Dorsolateral prefrontal cortex (tissue), 120 donors: ENCODE measurements at regions of chr6 and their contacts with region 1.

Region 1: DNA sequence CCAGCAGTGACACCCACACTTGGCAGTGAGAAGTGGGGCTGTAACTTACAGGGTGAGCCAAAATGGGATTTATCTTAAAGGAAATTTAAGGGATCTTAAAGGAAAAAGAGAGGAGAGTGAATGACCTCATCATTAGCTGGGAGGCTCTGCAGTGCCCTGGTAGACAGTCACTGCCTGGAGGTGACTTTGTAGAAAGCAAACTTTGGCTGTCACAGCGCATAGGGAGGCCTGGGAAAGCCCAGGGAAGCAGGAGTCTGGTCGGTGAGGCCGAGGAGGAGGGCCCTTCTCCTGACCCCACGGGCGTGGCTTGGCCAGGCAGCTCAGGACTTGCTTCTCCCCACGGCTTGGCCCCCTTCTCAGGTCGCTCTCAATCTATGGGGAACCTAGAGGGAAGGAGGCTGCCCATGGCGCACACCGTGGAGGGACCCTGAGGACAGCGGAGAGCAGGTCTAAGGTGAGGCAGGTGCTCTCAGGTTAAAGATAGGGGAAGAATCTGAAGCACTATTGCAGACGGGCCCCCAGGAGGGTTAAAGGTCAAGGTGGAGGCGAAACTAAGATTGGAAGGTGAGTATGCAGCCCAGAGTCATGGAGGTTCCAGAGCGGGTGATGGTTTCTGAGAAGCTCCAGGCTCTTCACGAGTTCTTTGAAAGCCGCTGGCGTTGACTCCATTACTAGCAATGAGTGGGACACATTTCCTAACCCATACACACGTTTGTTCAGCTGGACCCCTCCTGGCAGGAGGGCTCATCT is 15.6 kb upstream of the RIPK1 start:
- DNase-seq: no peak
- H3K4me3 ChIP-seq: peak overlapping the region in 9 of 59 donors; percentile 50 to 64 (median 63)
- H3K27ac ChIP-seq: peak overlapping the region in 1 of 59 donors; percentile 45
- H3K27me3 ChIP-seq: no peaks in the 10 kb centered on the region
- CTCF ChIP-seq: no peak

Region 2: DNA sequence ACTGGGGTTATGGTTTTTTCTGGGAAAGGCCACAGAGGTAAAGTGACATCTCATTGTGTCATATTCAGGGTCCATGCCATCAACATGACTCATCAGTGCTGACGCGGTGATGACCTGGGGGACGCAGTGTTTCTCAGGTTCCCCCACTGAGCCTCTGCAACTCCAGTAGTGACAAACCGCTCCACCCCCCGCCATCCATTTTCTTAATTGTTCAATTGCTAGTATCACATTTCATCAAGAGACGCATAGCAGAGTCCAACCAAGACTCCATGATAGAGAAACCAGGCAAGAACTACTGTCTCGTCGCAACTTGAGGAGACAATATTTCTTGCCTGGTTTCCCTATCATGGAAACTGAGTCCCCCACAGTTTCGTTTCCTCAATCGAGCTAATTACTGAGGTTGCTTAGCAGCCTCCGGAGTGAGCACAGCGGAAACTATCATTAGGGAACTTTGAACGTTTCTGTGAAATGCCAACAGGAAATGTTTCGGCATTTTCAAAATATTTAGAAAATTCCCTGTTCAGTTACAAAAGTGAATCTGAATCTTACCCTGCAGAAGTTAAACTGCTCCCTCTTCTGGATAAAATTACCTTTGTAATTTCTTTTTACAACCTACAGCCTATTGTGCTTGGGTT is 198.8 kb before region 1 on chr6:
- intact Hi-C with region 1: loop called in 1 of 2 experiments (anchors 5 kb)
- DNase-seq: no peak
- H3K4me3 ChIP-seq: peak overlapping the region in 54 of 59 donors; percentile 5 to 64 (median 44)
- H3K27ac ChIP-seq: peak overlapping the region in 54 of 59 donors; percentile 3 to 83 (median 63)
- H3K27me3 ChIP-seq: no peaks in the 10 kb centered on the region
- CTCF ChIP-seq: peak; percentile 24 to 69 (median 51)

Region 3: DNA sequence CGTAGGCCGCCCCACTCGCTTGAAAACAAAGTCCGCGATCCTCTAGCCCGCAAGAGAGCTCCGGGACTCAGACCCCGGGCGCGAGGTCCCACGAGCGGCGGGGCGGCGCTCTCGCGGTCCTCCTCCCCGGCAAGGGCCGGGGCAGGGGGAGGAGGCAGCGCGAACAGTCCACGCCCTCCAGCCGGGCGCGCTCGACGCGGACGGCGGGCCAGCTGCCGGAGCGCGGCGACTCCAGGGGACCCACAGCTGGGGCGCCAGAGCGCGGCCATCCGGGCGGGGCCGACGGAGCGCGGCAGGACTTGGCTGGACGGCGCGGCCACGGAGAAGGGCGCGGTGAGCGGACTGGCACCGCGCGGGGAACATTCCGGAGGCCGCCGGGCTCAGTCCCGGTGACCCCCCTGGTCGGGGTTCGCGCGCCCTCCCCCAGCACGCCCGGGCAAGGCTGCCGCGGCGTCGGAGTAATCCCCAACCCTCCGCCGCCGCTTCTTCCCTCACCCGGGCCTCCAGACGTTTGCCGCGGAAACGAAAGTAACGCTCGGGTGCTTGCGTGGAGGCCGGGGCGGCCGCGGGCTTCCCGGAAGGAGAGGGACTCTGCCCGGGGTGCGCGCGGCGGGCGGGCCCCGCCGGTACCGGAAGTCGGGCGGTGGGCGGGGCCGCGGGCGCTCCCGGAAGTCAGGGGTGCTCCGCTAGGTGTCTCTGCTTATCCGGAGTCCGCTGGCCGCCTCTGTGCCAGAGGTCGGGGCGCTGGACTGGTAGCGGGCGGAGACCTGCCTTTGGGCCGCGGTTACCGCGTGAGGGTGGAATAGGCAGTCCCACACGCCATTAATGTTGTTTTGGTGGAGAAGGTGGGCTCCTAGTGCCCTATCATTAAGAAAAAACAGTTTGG is 15.9 kb after region 1 on chr6 and contains the start of gene RIPK1:
- intact Hi-C with region 1: no loop called
- DNase-seq: peak; percentile 85 to 96 (median 92)
- H3K4me3 ChIP-seq: peak within 1 kb of the TSS; percentile 68 to 98 (median 89)
- H3K27ac ChIP-seq: peak within 1 kb of the TSS; percentile 94 to 100 (median 99)
- H3K27me3 ChIP-seq: no peaks in the 10 kb centered on the region
- CTCF ChIP-seq: peak in 55 of 56 donors; percentile 34 to 80 (median 64)
- total RNA-seq, gene RIPK1: 6.5 to 17.9 (median 11.1) TPM